ENCODE measurements at regions of chrX and their contacts with region 1.

Region 1: DNA sequence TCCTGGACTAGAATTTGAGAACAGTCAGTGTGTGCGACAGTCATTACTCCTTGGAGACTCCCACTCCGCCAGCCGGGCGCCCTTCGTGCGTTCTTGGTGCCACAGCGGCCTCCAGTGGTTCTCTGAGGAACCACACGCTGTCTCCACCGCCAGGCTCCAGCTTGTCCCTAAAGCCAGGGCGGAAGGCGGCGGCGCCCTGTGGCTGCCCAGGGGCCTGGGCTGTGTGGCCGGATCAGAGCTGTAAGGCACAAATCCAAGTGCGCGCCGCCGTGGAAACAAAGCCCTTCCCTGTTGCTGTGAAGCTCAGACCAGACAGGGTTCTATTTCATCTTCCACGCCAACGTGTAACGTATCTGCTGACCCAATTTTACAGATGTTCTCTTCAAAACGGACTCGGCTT is 34.2 kb downstream of the IDS start:
- DNase-seq: peak; percentile 83
- ATAC-seq: peak; percentile 92
- H3K4me3 Mint-ChIP-seq: no peak overlapping the region
- H3K27ac Mint-ChIP-seq: no peak overlapping the region
- H3K4me1 Mint-ChIP-seq: peaks cover 2% of the 10 kb centered on the region
- H3K27me3 Mint-ChIP-seq: no peaks in the 10 kb centered on the region

Region 2: DNA sequence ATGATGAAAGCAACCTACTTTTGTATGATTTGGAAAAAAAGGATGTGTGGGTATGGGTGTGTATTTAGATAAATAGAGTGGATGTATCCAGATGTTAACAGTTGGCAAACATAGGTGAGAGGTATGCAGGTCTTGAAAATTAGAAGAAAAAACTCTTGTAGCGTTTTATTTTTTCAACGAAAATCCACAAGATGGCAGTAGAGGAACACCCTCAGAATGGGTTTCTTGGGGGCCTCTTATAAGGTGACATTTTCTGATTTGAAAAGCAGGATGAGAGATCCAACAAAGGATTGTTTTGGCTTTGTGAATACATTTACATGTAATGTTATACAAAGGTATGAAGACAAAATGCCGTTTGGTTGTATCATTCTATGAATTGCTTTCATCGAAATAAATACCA is 1421.5 kb before region 1 on chrX:
- CTCF ChIA-PET with region 1: interaction called, 7 read pairs
- POLR2A ChIA-PET with region 1: no interaction called
- intact Hi-C with region 1: loop called (anchors 1 to 2 kb)
- DNase-seq: no peak
- ATAC-seq: no peak
- H3K4me3 Mint-ChIP-seq: no peak overlapping the region
- H3K27ac Mint-ChIP-seq: no peak overlapping the region
- H3K4me1 Mint-ChIP-seq: no peaks in the 10 kb centered on the region
- H3K27me3 Mint-ChIP-seq: no peaks in the 10 kb centered on the region

Region 3: GRCh38 chrX:148133105-148133725 is 1337.7 kb before region 1 on chrX:
- CTCF ChIA-PET with region 1: no interaction called
- POLR2A ChIA-PET with region 1: no interaction called
- intact Hi-C with region 1: loop called (anchors 10 kb)
- DNase-seq: no peak
- ATAC-seq: no peak
- H3K4me3 Mint-ChIP-seq: no peak overlapping the region
- H3K27ac Mint-ChIP-seq: no peak overlapping the region
- H3K4me1 Mint-ChIP-seq: no peaks in the 10 kb centered on the region
- H3K27me3 Mint-ChIP-seq: no peaks in the 10 kb centered on the region

Region 4: DNA sequence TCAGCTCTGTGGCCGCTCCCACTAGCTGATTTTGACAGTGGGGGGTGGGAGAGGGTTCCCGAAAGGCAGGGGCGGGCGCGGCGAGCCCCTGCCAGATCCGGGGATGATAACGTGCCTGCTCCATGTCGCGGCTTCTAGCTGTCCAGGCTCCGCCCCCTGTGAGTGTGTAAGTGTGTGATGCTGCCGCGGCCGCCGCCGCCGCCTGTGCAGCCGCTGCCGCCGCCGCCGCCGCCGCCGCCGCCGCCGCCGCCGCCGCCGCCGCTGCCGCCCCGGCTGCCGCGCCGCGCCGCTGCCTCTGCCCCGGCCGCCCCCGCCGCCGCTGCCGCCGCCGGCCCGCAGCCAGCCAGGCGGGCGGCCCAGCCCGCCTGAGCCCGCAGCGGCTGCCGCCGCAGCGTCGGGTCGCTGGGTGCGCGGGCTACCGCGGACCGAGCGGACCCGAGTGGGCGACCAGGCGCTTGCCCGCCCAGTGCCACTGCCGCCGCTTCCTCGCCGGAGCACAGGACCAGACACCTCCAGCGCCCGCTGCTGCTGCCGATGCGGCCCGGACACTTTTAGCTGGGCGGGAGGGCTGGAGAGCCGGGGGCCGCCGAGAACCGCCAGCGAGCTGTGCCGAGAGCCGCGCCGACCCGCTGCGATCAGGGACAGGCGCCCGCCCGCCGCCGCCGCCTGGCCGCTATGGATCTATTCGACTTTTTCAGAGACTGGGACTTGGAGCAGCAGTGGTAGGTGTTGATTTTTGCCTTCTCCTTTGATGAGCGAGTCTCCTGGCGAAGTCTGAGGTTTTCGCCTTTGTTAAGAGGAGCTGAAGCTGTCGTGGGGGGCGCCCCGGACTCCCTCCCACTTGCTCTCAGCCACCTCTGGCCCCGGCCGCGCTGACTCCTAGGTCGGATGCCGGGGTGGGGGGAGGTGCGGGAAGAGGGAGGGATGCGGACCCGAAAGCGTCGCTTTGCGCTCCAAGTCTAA is 970.3 kb before region 1 on chrX and contains the start of gene AFF2:
- CTCF ChIA-PET with region 1: no interaction called
- POLR2A ChIA-PET with region 1: no interaction called
- intact Hi-C with region 1: loop called in 1 of 2 experiments (anchors 10 kb)
- DNase-seq: peak; percentile 71
- ATAC-seq: peak; percentile 80
- H3K4me3 Mint-ChIP-seq: peak within 1 kb of the TSS; percentile 73
- H3K27ac Mint-ChIP-seq: no peak within 1 kb of the TSS
- H3K4me1 Mint-ChIP-seq: peaks cover 14% of the 10 kb centered on the region
- H3K27me3 Mint-ChIP-seq: peaks cover 2% of the 10 kb centered on the region
- total RNA-seq, gene AFF2: 1.3 to 2.2 TPM